GM10248 (cell line): ENCODE measurements at regions of chr9 and their contacts with region 1.

Region 1: DNA sequence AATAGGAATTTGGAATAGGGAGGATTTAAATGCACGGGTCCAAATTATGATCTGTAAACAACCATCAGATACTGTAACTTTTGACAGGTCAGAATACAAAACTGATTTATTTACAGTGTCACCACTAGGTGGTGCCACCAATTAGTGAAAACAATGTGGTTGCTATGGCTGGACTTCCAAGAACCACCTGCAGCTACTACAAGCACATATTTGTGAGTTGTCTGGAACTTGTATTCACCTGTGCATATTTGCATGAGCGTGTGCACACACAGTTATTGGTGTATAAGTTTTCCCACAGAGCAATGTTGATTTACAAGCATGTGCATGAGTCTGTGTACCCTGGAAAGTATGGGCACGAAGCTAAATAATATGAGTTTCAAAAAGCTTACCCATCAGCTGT is 3.0 kb upstream of the HRCT1 start:
- DNase-seq: peak; percentile 74
- CTCF ChIP-seq: peak; percentile 74

Region 2: DNA sequence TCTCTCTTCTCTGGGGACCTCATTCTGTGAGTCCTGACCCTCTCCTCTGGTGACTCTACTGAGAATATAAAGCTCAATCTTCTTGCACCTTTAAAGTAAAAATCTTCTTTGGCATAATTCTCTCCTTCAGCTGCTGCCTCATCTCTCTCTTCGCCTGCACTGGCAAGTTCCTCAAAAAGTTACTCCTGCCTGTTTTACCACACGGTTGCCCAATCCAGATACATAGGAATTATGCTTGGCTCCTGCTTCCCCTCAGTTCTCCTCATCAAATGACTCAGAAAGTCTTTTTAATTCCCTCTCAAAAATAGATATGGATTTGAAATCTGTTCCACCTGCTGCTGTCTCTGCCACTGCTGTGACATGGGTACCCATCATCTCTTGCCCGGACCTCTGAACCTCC is 11.4 kb before region 1 on chr9:
- CTCF ChIA-PET with region 1: interaction called, 12 read pairs
- POLR2A ChIA-PET with region 1: no interaction called
- DNase-seq: no peak
- CTCF ChIP-seq: no peak